Activated CD4-positive, alpha-beta T cell treated with anti-CD3 and anti-CD28 coated beads, Interleukin-2, amount 10 ng/mL, durations not matched to agents 24 days and 14 days (primary cell): ENCODE measurements at regions of chr22 and their contacts with region 1.

Region 1: GRCh38 chr22:41091132-41092022 is 1.0 kb upstream of the EP300 start:
- DNase-seq: peak; percentile 99
- H3K4me3 Mint-ChIP-seq: peak overlapping the region; percentile 90
- H3K27ac Mint-ChIP-seq: peak overlapping the region; percentile 99
- H3K4me1 Mint-ChIP-seq: peaks cover 26% of the 10 kb centered on the region
- H3K27me3 Mint-ChIP-seq: no peaks in the 10 kb centered on the region

Region 2: GRCh38 chr22:40636380-40637182 is 454.8 kb before region 1 on chr22 and contains the start of gene MRTFA:
- intact Hi-C with region 1: loop called (anchors 5 kb)
- DNase-seq: peak; percentile 100
- H3K4me3 Mint-ChIP-seq: peak within 1 kb of the TSS; percentile 91
- H3K27ac Mint-ChIP-seq: peak within 1 kb of the TSS; percentile 95
- H3K4me1 Mint-ChIP-seq: peaks cover 32% of the 10 kb centered on the region
- H3K27me3 Mint-ChIP-seq: no peaks in the 10 kb centered on the region
- total RNA-seq, gene MRTFA: 51.7 and 51.9 TPM in 2 replicates

Region 3: DNA sequence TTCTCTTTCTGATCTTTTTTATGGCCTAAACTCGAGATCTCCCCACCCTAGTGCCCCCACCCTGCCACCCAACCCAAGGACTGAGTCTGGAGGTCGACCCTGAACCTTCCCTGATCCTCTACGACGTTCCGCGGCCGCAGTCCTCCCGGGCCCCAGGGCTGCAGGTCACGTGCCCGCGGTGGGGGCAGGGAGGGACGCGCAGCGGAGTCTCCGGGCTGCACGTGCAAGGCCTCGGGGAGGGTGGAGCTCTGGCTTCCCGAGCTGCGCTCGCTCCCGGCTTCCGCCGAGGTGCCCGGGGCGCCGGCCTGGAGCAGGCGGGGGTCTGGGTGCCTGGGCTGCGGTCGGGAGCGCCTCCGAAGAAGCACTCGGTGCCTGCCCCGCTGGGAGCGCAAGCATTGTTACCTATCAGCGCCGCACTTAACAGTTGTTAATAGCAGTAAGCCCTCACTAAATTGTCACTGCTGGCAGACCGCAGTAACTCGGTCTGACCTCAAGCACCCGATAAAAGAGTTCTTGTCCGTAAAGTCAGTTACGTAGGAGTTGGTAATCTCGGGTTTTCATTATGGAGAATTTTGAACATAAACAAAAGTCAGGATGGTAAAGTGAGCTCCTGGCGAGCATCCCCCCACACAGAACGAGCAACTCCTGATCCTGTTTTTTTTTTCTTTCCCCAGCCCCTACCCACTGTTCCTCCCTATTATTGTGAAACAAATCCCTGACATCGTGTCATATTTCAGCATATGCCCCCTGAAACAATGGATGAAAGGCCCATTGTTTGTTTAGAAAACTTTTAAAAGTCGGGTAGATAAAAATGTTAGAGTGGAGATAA is 68.7 kb before region 1 on chr22:
- intact Hi-C with region 1: loop called (anchors 1 kb)
- DNase-seq: peak; percentile 93
- H3K4me3 Mint-ChIP-seq: peak overlapping the region; percentile 86
- H3K27ac Mint-ChIP-seq: peak overlapping the region; percentile 88
- H3K4me1 Mint-ChIP-seq: peaks cover 20% of the 10 kb centered on the region
- H3K27me3 Mint-ChIP-seq: peaks cover 10% of the 10 kb centered on the region

Region 4: DNA sequence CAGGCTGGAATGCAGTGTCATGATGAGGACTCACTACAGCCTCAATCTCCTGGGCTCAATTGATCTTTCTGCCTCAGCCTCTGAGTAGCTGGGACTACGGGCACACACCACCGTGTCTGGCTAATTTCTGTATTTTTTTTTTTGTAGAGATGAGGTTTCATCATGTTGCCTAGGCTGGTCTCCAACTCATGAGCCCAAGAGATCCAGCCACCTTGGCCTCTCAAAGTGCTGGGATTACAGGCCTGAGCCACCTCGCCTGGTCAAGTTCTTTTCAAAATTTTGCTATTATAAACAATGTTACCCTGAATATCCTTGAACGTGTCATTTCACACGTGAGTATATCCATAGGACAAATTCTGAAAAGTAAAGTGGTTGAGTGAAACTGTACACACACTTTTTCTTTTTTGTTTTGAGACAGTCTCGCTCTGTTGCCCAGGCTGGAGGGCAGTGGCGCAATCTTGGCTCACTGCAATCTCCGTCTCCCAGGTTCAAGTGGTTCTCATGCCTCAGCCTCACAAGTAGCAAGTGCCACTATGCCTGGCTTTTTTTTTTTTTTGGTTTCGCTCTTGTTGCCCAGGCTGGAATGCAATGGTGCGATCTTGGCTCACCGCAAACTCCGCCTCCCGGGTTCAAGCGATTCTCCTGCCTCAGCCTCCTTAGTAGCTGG is 20.6 kb before region 1 on chr22:
- intact Hi-C with region 1: loop called (anchors 2 kb)
- DNase-seq: no peak
- H3K4me3 Mint-ChIP-seq: no peak overlapping the region
- H3K27ac Mint-ChIP-seq: no peak overlapping the region
- H3K4me1 Mint-ChIP-seq: peaks cover 9% of the 10 kb centered on the region
- H3K27me3 Mint-ChIP-seq: no peaks in the 10 kb centered on the region

Region 5: DNA sequence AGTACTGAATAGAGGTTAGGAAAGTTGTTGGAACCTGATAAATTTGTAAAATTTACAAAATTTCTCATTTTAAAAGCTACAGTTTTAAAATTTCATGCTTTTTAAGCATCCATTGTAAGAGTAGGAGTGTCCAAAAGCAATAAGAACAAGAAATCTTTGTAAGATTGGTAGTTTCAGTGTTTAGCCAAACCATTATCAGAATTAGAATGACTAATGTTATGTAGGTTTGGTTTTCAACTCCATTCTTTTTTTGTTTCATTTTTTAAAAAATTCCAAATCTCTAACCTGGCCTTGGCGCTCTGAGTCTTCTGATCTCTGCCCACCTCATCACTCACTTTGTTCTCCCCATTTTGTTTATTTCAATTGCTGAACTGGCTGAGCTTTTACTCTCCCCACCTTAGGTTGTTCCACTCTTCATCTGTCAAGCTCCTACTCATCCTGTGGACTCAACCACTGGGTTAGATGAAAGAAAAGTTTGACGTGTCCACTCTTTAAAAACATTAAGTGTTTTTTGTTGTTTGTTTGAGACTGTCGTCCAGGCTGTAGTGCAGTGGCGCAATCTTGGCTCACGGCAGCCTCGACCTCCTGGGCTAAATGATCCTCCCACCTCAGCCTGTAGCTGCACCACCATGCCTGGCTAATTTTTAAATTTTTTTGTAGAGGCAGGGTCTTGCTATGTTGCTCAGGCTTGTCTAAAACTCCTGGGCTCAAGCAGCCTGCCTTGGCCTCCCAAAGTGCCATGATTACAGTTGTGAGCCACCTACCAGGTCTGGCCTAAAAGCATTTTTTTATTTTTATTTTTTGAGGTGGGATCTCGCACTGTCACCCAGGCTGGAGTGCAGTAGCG is 15.0 kb after region 1 on chr22:
- intact Hi-C with region 1: loop called (anchors 2 kb)
- DNase-seq: no peak
- H3K4me3 Mint-ChIP-seq: no peak overlapping the region
- H3K27ac Mint-ChIP-seq: peak overlapping the region; percentile 66
- H3K4me1 Mint-ChIP-seq: peaks cover 22% of the 10 kb centered on the region
- H3K27me3 Mint-ChIP-seq: no peaks in the 10 kb centered on the region

Region 6: DNA sequence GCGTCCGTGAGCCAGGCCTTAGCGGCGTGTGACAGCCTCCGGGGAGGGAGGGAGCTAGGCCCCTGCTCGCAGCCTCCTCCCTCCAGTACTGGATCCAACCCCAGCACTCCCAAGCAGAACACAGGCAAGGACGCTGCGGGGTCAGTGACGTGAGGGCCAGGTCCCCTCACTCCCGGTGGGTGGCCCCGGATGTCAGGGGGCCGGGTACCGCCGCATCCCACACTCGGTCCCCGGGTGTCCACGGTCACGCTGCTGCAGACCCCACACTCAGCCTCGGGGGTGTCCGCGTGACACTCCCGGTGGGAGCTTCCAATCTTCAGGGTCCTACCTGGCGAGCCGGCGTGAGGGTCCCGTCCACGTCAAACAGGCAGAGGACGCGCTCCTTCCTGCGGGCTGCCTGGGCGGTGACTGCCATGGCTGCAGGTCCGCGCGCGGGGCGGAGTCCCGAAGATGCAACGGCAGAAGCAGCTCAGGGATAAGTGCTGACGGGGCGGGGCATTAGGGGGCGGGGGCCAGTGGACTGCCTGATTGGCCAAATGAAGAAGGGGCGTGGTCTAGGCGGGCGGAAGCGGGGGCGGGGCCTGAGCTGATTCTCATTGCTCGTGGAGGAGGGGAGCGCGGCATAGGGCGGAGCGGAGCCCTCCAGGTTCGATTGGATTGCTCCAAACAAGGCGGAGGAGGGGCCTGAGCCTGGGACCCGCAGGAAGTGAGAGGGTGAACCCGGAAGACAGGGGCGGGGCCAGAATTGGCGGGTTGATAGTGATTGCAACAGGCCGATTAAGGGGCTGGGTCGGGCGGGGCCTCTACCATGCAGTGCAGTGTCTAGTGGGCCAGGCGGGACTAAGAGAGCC is 498.2 kb after region 1 on chr22 and contains the start of gene PMM1:
- intact Hi-C with region 1: loop called (anchors 5 kb)
- DNase-seq: peak; percentile 100
- H3K4me3 Mint-ChIP-seq: peak within 1 kb of the TSS; percentile 95
- H3K27ac Mint-ChIP-seq: peak within 1 kb of the TSS; percentile 86
- H3K4me1 Mint-ChIP-seq: peaks cover 23% of the 10 kb centered on the region
- H3K27me3 Mint-ChIP-seq: no peaks in the 10 kb centered on the region
- total RNA-seq, gene PMM1: 19.7 and 23.1 TPM in 2 replicates